ENCODE measurements at regions of chr2 and their contacts with region 1.

Region 1: GRCh38 chr2:96760036-96760985 is at the start of gene CNNM4:
- DNase-seq: peak; percentile 96 to 98 (median 98)
- ATAC-seq: peak; percentile 97
- H3K4me3 ChIP-seq: peak within 1 kb of the TSS; percentile 59
- H3K27ac ChIP-seq: peak within 1 kb of the TSS; percentile 65
- H3K4me1 ChIP-seq: peaks cover 21% of the 10 kb centered on the region
- H3K27me3 ChIP-seq: no peaks in the 10 kb centered on the region
- total RNA-seq, gene CNNM4: 10.4 to 24.9 (median 21.5) TPM

Region 2: GRCh38 chr2:96638144-96639121 is 121.9 kb before region 1 on chr2 and contains the start of gene KANSL3:
- intact Hi-C with region 1: loop called in 2 of 4 experiments (anchors 5 to 10 kb)
- DNase-seq: peak; percentile 90 to 96 (median 95)
- ATAC-seq: peak; percentile 88 to 90
- H3K4me3 ChIP-seq: peak within 1 kb of the TSS; percentile 72
- H3K27ac ChIP-seq: peak within 1 kb of the TSS; percentile 82
- H3K4me1 ChIP-seq: peaks cover 6% of the 10 kb centered on the region
- H3K27me3 ChIP-seq: no peaks in the 10 kb centered on the region
- total RNA-seq, gene KANSL3: 33.9 to 40.9 (median 34.8) TPM

Region 3: DNA sequence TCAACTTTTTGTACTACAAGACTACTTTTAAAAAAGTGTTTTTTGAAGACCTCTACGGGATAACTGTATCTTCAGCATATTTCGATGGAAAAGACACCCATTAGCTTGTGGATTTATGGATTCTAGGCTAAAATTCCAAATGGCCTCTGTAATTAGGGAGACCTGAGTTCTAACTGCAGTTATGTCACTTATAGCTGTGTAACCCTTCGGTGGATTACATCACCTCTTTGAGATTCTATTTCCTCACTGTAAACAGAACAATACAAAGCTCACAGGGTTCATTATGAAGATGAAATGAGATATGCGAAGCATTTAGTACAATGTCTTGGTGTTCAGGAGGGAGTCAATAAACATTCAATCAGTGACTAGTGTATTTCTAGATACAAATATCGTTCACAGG is 44.7 kb before region 1 on chr2:
- intact Hi-C with region 1: no loop called
- DNase-seq: no peak
- ATAC-seq: no peak
- H3K4me3 ChIP-seq: no peak overlapping the region
- H3K27ac ChIP-seq: no peak overlapping the region
- H3K4me1 ChIP-seq: no peaks in the 10 kb centered on the region
- H3K27me3 ChIP-seq: no peaks in the 10 kb centered on the region

Region 4: DNA sequence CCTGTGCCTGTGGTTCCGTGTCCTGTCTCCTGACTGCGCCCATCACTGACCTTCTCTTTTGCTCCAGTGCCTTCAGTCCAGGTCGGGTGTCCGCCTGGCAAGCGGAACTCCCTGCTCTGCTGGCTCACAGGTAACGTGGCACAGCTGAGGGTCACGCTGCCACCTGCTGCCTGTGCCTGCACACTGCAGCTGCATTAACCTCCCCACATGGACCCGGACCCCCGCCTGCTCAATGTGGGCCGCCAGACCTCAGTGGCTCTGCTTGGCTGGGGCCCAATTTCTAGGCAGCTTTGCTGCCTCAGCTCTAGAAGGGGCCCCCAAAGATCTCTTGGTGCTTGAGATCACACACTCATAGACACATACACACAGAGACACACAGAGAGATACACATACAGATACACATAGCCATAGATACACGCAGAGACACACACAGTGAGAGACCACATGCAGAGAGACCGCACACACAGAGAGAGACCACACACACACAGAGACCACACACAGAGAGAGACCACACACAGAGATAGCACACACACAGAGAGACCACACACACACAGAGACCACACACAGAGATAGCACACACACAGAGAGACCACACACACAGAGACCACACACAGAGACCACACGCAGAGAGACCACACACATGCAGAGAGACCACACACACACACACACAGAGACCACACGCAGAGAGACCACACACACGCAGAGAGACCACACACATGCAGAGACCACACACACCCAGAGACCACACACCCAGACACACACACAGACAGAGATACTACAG is 40.9 kb after region 1 on chr2:
- intact Hi-C with region 1: loop called in 1 of 4 experiments (anchors 5 kb)
- DNase-seq: peak; percentile 69 to 89 (median 87)
- ATAC-seq: peak; percentile 84 to 85
- H3K4me3 ChIP-seq: no peak overlapping the region
- H3K27ac ChIP-seq: no peak overlapping the region
- H3K4me1 ChIP-seq: no peaks in the 10 kb centered on the region
- H3K27me3 ChIP-seq: no peaks in the 10 kb centered on the region

Measured in right cardiac atrium (tissue), 5 donors.